Activated naive CD4-positive, alpha-beta T cell treated with anti-CD3 and anti-CD28 coated beads for 36 hours (primary cell): ENCODE measurements at regions of chr1 and their contacts with region 1.

Region 1: GRCh38 chr1:235866913-235867845 is 473 bp upstream of the LYST start:
- DNase-seq: peak; percentile 98
- H3K4me3 Mint-ChIP-seq: peak overlapping the region; percentile 91
- H3K27ac Mint-ChIP-seq: peak overlapping the region; percentile 94
- H3K4me1 Mint-ChIP-seq: peaks cover 45% of the 10 kb centered on the region
- H3K27me3 Mint-ChIP-seq: no peaks in the 10 kb centered on the region

Region 2: DNA sequence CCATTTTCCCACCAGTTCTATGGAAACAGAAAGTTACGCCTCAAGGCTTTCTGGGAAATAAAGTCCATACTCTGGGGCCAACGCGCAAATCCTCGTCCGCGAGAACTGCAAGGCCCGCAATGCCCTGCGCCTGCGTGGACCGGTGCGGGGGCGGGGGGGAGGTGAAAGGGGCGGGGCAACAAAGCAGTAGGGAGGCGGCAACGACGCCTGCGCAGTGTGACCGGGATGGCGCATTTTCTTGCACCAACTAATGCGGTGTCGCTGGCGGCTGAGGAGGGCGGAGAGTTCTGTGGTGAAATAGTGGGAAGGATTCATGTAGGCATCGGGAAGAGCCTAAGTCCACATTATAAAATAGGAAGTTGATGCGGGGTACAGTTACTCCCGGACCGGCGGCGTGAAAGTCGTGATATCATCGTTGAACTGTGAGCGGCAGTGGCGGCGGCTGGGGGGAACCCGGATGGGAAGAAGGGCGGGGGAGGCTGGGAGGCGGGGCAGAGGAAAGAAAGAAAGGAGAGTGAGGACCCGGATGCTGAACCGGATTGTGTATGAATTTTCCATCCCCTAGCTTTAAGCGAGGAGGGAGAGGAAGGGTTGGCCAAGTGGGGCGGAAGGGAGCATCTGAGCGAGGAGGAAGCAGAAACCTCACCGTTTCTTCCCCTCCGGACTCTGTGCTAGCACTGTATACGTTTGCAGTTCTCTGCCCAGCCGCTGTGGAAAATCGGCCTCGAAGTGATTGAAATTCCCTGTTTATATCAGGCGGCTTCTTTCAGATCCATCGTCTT is 538.6 kb before region 1 on chr1 and contains the start of gene GGPS1:
- CTCF ChIA-PET with region 1: no interaction called
- intact Hi-C with region 1: loop called (anchors 1 kb)
- DNase-seq: peak; percentile 99
- H3K4me3 Mint-ChIP-seq: no peak within 1 kb of the TSS
- H3K27ac Mint-ChIP-seq: peak within 1 kb of the TSS; percentile 94
- H3K4me1 Mint-ChIP-seq: peaks cover 31% of the 10 kb centered on the region
- H3K27me3 Mint-ChIP-seq: no peaks in the 10 kb centered on the region
- total RNA-seq, gene GGPS1: 35.3 to 36.9 TPM

Region 3: DNA sequence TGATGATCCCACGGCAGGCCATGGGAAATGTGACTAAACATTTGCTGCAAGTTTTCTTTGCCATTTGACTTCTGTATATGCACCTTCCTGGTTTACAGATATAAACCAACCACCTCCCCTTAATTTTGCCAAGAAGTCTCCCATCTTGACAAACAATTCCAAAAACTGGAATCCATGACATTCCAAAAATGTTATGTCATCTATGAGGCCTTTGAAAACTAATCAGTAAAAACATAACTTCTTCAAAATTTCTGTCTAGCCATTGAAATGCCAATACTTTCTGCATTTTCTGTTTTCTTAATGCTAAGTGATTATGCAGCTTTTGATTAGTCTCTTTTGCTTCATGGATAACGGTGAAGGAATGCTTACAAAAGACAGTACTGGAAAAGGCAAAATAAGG is 84.6 kb before region 1 on chr1:
- CTCF ChIA-PET with region 1: no interaction called
- intact Hi-C with region 1: no loop called
- DNase-seq: no peak
- H3K4me3 Mint-ChIP-seq: no peak overlapping the region
- H3K27ac Mint-ChIP-seq: no peak overlapping the region
- H3K4me1 Mint-ChIP-seq: no peaks in the 10 kb centered on the region
- H3K27me3 Mint-ChIP-seq: no peaks in the 10 kb centered on the region

Region 4: DNA sequence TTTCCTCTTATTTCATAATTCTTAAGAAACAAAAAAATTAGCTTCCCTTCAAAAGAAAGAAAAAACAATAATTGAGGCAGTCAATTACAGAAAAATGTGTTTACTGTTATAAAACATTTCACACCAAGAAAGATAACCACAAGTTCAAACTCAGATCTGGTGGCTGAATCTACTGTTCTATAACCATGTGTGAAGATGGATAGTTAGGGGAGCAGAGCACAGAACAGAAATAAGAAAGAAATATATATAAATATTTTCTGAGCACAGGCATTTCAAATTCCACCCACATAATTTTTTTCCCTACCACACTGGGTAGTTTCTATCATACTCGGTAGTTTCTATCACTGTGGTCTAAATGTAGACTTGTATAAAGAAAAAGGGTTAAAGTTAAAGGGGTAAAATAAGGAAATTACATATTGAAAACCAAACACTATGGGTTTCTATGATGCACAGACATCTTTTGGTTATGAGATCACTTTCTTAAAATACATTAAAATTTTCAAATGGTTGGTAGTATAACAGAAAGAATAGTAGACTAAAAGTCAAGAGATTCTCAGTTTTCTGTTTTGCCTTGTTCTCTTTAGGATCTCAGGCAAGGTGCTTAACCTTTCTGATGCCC is 11.3 kb before region 1 on chr1:
- CTCF ChIA-PET with region 1: interaction called, 6 read pairs
- intact Hi-C with region 1: loop called (anchors 1 kb)
- DNase-seq: no peak
- H3K4me3 Mint-ChIP-seq: no peak overlapping the region
- H3K27ac Mint-ChIP-seq: no peak overlapping the region
- H3K4me1 Mint-ChIP-seq: peaks cover 54% of the 10 kb centered on the region
- H3K27me3 Mint-ChIP-seq: no peaks in the 10 kb centered on the region

Region 5: GRCh38 chr1:235946571-235946981 is 79.4 kb after region 1 on chr1:
- CTCF ChIA-PET with region 1: no interaction called
- intact Hi-C with region 1: loop called (anchors 1 kb)
- DNase-seq: no peak
- H3K4me3 Mint-ChIP-seq: no peak overlapping the region
- H3K27ac Mint-ChIP-seq: no peak overlapping the region
- H3K4me1 Mint-ChIP-seq: no peaks in the 10 kb centered on the region
- H3K27me3 Mint-ChIP-seq: no peaks in the 10 kb centered on the region

Region 6: DNA sequence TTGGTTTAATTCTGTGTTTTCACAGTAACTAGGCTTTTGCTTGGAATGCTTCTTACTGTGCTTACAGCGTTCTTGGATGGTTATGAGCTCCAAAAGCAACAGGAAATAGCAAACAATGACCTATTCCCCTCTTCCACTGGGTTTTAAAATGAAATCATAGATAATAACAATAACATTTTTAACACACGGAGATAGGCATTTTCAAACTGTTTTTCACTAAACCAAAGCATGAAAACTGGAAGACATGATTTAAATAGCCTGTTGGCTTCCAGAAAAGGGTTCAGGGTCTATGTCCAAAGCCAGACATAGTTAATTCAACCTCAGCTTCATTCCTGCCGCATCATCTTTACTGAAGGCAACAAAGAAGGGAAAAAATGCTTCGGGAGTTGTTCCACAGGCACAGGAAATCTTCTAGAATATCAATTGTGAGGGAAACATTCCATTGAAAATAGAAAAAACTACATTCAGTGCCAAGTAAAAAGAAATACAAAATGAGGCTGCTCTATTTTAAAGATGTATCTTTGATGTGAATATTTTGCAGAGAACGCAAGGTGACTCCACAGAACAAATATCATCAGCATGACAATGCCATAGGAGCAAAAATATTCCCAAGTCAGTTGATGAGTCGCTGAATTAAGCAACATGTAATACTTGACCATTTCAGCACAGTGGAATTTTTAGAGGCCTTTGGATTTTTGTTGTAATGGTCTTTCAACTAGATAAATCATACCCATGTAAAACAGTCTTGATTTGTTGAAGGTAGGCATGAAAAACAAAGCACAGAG is 117.1 kb after region 1 on chr1:
- CTCF ChIA-PET with region 1: no interaction called
- intact Hi-C with region 1: no loop called
- DNase-seq: no peak
- H3K4me3 Mint-ChIP-seq: no peak overlapping the region
- H3K27ac Mint-ChIP-seq: no peak overlapping the region
- H3K4me1 Mint-ChIP-seq: no peaks in the 10 kb centered on the region
- H3K27me3 Mint-ChIP-seq: no peaks in the 10 kb centered on the region

Region 7: DNA sequence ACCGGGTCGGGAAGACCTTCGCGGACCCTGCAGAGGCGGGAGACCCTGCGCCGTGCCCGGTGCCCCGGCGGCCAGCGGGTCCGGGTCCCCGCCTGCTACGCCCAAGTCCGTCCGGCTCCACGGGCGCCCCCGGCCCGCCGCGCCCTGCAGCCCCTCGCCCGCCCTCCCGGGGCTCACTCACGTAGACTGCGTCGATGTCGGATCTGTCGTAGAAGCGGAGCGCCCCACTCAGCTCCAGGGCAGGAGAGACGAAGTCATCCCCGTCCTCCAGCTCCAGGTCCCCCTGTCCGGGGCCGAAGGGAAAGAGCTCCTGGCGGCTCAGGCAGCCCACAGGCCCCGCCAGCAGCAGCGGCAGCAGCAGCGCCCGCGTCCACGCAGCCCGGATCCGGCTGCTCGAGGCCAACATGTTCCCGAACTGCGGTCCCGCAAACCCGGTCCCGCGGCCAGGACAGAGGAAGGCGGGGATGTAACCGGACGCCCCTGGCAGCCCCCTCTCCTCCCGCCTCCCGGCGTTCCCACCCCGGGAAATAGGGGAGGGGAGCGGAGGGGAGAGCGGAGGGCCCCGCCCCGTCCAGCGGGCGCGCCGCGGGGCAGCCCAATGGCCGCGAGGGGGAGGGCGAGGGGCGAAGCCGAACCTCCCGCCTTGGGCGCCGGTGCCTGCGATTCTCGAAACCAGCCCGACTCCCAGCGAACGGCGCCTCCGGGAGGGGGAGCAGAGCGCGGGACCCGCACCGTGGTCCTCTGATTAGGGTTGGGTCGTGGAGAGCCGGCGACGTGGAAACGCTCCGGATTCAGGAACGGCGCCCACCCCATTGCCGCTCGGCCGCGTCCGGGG is 197.7 kb after region 1 on chr1 and contains the start of gene NID1:
- CTCF ChIA-PET with region 1: no interaction called
- intact Hi-C with region 1: loop called (anchors 2 kb)
- DNase-seq: peak; percentile 25
- H3K4me3 Mint-ChIP-seq: peak within 1 kb of the TSS; percentile 63
- H3K27ac Mint-ChIP-seq: no peak within 1 kb of the TSS
- H3K4me1 Mint-ChIP-seq: peaks cover 26% of the 10 kb centered on the region
- H3K27me3 Mint-ChIP-seq: peaks cover 38% of the 10 kb centered on the region
- total RNA-seq, gene NID1: 0.10 TPM in 1 of 2 experiments, not detected in the other